HAP-1 (cell line): ENCODE measurements at regions of chr18 and their contacts with region 1.

Region 1: GRCh38 chr18:6683112-6683876 is 46.2 kb upstream of the ARHGAP28 start:
- DNase-seq: no peak
- H3K4me3 ChIP-seq: no peak overlapping the region
- H3K4me1 ChIP-seq: no peaks in the 10 kb centered on the region
- H3K27me3 ChIP-seq: no peaks in the 10 kb centered on the region

Region 2: GRCh38 chr18:6781786-6782185 is 98.5 kb after region 1 on chr18:
- in situ Hi-C with region 1: loop called (anchors 25 kb)
- DNase-seq: no peak
- H3K4me3 ChIP-seq: no peak overlapping the region
- H3K4me1 ChIP-seq: no peaks in the 10 kb centered on the region
- H3K27me3 ChIP-seq: no peaks in the 10 kb centered on the region